Left cardiac atrium (tissue), 4 donors: ENCODE measurements at regions of chr5 and their contacts with region 1.

Region 1: GRCh38 chr5:119267958-119268386 is 87.8 kb upstream of the TNFAIP8 start:
- DNase-seq: peak; percentile 95
- ATAC-seq: peak; percentile 91 to 94

Region 2: GRCh38 chr5:118987988-118988865 is 279.7 kb before region 1 on chr5 and contains the start of gene DTWD2:
- intact Hi-C with region 1: loop called in 1 of 2 experiments (anchors 2 kb)
- DNase-seq: peak; percentile 96
- ATAC-seq: peak; percentile 97 to 99
- total RNA-seq, gene DTWD2: 8.4 to 10.5 TPM

Region 3: GRCh38 chr5:119190470-119191095 is 77.4 kb before region 1 on chr5:
- intact Hi-C with region 1: no loop called
- DNase-seq: no peak
- ATAC-seq: no peak

Region 4: DNA sequence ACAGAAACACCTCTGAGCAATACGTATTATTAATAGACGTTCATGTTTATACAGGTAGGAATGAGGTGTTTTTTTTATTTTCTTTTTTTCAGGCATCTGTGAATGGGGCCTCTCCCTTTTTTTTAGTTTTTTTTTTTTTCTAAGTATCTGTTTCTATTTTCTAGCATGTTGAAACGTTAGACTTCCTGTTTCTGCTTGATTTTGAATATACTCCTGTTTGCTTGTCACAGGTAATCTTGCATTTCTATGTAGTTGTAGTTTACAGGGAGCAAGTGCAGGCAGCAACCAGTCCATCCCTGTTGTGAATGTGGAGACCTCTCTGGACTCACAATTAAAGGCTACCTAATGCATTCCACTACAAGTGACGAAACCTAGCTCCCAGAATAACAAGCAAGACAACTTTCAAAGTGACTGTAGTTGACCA is 65.0 kb after region 1 on chr5:
- intact Hi-C with region 1: loop called in 1 of 2 experiments (anchors 10 kb)
- DNase-seq: no peak
- ATAC-seq: no peak

Region 5: DNA sequence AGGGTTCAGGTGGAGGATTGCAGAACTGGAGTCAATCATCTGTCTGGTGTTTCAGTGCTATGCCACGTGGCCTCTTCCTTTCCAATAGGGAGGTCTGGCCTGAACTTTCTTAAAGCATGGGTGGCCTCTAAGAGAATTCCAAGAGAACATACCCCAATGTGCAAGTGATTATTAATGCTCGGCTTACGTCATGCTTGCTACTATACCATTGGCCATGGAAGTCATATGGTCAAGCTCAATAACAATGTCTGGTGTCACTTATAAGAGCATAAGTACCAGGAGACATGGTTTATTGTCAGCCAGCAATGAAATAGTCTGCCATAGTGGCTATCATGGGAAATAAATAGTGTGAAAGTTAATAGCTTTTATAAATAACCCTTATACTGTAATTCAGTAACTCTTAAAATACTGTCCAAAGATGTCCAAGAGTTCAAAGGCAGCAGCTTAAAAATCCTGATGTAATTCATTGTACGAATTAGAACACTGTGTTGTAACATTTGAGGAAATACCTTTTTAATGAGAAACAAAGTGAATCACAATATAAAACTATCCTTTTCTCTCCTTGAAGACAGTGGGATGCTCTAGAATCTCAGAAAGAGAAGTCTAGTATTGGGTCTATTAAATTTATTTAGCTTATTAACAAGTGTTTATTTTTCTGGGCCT is 840.7 kb after region 1 on chr5:
- intact Hi-C with region 1: no loop called
- DNase-seq: no peak
- ATAC-seq: no peak